Activated CD4-positive, alpha-beta memory T cell treated with anti-CD3 and anti-CD28 coated beads for 36 hours (primary cell): ENCODE measurements at regions of chr18 and their contacts with region 1.

Region 1: GRCh38 chr18:36809590-36810381 is 19.0 kb downstream of the TPGS2 start:
- DNase-seq: peak; percentile 25
- H3K4me3 Mint-ChIP-seq: no peak overlapping the region
- H3K27ac Mint-ChIP-seq: no peak overlapping the region
- H3K4me1 Mint-ChIP-seq: peaks cover 15% of the 10 kb centered on the region
- H3K27me3 Mint-ChIP-seq: no peaks in the 10 kb centered on the region

Region 2: DNA sequence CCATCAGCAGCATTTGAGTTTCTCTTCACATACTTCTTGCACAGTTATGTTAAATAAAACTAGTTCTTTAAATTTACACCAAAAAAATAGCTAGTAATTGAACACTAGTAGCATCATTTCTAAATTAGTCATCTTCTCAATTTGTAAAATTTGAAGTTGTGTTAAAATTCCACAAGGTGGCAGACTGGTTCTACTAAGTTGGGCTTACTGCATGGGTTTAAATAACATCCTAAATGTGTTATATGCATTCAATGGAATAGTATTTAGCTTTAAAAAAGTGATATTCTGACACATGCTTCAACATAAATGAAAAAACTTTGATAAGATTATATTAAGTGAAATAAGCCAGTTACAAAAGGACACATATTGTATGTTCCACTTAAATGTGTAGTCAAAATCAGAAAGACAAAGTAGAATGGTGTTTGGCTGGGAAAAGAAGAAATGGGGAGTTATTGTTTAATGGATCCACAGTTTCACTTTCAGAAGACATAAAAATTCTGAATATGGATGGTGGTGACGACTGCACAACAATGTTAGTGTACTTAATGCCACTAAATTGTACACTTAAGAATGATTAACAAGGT is 713.8 kb before region 1 on chr18:
- CTCF ChIA-PET with region 1: no interaction called
- POLR2A ChIA-PET with region 1: no interaction called
- intact Hi-C with region 1: loop called (anchors 5 kb)
- DNase-seq: no peak
- H3K4me3 Mint-ChIP-seq: no peak overlapping the region
- H3K27ac Mint-ChIP-seq: no peak overlapping the region
- H3K4me1 Mint-ChIP-seq: peaks cover 12% of the 10 kb centered on the region
- H3K27me3 Mint-ChIP-seq: peaks cover 2% of the 10 kb centered on the region

Region 3: DNA sequence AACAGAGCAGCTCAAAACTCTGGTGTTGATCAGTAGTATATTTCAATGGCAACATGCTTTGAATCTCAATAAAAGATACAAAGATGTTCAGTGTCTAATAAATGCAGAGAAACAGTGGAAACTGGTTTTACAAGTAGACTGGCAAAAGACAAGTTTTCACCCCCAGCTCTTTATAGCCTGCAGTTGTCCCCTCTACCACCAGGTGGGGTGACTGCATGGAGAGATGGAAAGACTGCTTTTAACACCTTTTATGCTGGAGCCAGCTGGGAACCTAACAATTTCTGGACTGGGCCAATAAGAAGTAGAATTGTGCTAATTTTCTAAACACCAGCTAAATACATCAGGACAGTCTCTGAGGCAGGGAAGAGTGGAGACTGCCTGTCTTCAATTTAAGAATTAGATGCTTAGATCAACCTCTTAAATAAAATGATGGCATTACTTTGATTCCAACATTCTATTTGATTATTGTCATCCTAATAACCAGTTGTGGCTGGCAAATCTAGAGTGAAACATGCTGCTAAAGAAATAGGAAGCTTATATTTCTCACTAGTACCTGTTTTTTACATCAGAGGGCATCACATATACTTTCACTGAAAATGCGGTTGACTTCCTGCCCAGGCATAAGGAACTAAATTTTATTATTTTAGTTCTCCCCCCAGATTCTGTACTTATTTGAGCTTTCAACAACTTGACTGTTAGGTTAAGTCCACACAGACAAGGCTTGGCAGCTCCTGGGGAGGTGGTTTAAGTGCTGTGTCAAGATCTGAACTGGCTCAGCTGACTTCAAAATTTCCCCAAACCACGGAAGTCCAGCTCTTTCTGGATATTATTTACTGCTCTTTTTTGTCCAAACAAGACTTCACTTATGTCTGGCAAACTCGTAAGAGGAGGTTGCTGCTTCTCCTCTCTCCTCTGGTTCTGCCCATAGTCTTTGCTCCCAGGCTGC is 121.5 kb before region 1 on chr18:
- CTCF ChIA-PET with region 1: interaction called, 25 read pairs
- POLR2A ChIA-PET with region 1: no interaction called
- intact Hi-C with region 1: no loop called
- DNase-seq: peak; percentile 63
- H3K4me3 Mint-ChIP-seq: no peak overlapping the region
- H3K27ac Mint-ChIP-seq: no peak overlapping the region
- H3K4me1 Mint-ChIP-seq: no peaks in the 10 kb centered on the region
- H3K27me3 Mint-ChIP-seq: peaks cover 8% of the 10 kb centered on the region

Region 4: DNA sequence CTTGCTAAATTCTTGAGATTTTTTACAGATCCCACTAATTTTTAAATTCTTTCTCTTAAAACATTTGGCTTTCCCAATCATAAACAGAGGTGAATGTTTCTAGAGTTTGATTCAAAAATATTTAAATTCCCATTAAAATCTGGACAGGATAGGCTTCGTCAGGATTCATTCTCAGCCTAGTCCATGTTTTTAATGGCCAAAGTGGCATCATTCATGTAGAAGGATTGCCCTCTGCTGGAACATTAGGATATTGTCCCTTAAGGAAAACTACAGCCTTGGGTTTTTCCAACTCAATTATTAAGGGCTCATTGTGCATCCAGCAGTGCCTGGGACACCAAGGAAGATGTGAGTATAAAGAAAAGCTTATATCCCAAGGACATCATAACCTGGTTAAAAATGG is 52.7 kb before region 1 on chr18:
- CTCF ChIA-PET with region 1: no interaction called
- POLR2A ChIA-PET with region 1: no interaction called
- intact Hi-C with region 1: loop called (anchors 5 kb)
- DNase-seq: no peak
- H3K4me3 Mint-ChIP-seq: no peak overlapping the region
- H3K27ac Mint-ChIP-seq: no peak overlapping the region
- H3K4me1 Mint-ChIP-seq: no peaks in the 10 kb centered on the region
- H3K27me3 Mint-ChIP-seq: peaks cover 6% of the 10 kb centered on the region

Region 5: DNA sequence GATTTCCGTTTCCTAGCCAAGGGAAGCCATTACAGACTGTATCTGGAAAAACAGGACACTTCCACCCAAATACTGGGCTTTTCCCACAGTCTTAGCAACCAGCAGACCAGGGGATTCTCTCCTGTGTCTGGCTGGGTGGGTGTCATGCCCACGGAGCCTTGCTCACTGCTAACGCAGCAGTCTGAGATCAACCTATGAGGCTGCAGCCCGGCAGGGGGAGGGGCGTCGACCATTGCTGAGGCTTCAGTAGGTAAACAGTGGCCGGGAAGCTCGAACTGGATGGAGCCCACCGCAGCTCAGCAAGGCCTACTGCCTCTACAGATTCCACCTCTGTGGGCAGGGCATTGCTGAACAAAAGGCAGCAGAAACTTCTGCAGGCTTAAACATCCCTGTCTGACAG is 150.3 kb after region 1 on chr18:
- CTCF ChIA-PET with region 1: no interaction called
- POLR2A ChIA-PET with region 1: no interaction called
- intact Hi-C with region 1: no loop called
- DNase-seq: no peak
- H3K4me3 Mint-ChIP-seq: no peak overlapping the region
- H3K27ac Mint-ChIP-seq: no peak overlapping the region
- H3K4me1 Mint-ChIP-seq: no peaks in the 10 kb centered on the region
- H3K27me3 Mint-ChIP-seq: no peaks in the 10 kb centered on the region